IMR-90 (cell line): ENCODE measurements at regions of chr5 and their contacts with region 1.

Region 1: GRCh38 chr5:150458819-150459557 is 9.4 kb upstream of the RPS14 start:
- DNase-seq: peak; percentile 38
- ATAC-seq: peak; percentile 98
- H3K4me3 ChIP-seq: no peak overlapping the region
- H3K27ac ChIP-seq: peak overlapping the region; percentile 33; the same call in 1 of the 2 replicates
- H3K4me1 ChIP-seq: 0 out of 2 replicates have a peak, but pooled peaks cover 2% of the 10 kb centered on the region
- H3K27me3 ChIP-seq: no peaks in the 10 kb centered on the region
- CTCF ChIP-seq: peak; percentile 84
- POLR2A ChIP-seq: no peak
- RAD21 ChIP-seq: peak; percentile 87

Region 2: DNA sequence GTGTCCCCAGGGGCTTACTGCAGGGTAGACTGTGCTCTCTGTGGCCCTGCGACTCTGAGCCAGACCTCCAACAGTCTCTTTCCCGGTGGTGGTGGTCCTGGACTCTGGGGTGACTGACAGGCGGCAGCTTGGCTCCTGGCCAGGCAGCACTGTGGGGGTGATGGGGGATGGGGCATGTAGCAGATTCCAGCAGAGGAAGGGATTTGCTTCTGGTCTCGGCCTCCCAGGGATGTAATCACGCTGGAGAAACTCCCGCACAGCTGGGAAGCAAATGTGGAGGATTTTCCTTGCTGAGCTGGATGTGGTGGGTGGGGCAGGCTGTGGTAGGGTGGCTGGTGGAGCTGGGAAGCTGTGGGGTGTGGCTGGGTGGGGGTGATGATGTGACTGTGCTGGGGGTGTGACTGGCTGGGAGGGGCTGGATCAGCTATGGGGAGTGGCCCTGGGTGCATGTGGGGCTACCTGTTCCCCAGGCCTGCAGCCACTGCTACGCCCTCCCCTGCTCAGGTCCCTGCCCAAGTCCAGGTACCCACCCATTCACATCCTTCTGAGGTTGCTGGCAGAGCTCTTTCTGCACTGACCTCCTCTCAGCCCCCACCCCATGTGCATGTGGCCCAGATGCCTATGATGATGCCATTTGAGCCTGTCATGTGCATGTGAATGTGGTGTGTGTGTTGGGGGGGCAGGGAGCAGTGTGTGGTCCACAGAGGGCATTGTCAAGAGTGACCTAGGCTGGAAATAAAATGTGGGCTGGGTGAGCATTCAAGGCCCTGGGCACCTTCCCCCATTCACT is 52.8 kb after region 1 on chr5:
- CTCF ChIA-PET with region 1: no interaction called
- POLR2A ChIA-PET with region 1: no interaction called
- dilution Hi-C with region 1: no loop called
- in situ Hi-C with region 1: no loop called
- intact Hi-C with region 1: no loop called
- DNase-seq: peak; percentile 80
- ATAC-seq: peak; percentile 68
- H3K4me3 ChIP-seq: no peak overlapping the region
- H3K27ac ChIP-seq: peak overlapping the region; percentile 38
- H3K4me1 ChIP-seq: peaks cover 63% of the 10 kb centered on the region
- H3K27me3 ChIP-seq: no peaks in the 10 kb centered on the region
- CTCF ChIP-seq: no peak
- POLR2A ChIP-seq: no peak
- RAD21 ChIP-seq: no peak

Region 3: GRCh38 chr5:150523472-150524350 is 64.7 kb after region 1 on chr5:
- CTCF ChIA-PET with region 1: interaction called, 3 read pairs
- POLR2A ChIA-PET with region 1: no interaction called
- dilution Hi-C with region 1: no loop called
- in situ Hi-C with region 1: loop called (anchors 5 kb)
- intact Hi-C with region 1: loop called (anchors 1 kb)
- DNase-seq: peak; percentile 81
- ATAC-seq: peak; percentile 80
- H3K4me3 ChIP-seq: no peak overlapping the region
- H3K27ac ChIP-seq: no peak overlapping the region
- H3K4me1 ChIP-seq: peaks cover 33% of the 10 kb centered on the region
- H3K27me3 ChIP-seq: no peaks in the 10 kb centered on the region
- CTCF ChIP-seq: peak; percentile 65
- POLR2A ChIP-seq: no peak
- RAD21 ChIP-seq: peak; percentile 77

Region 4: GRCh38 chr5:150544611-150545219 is 85.7 kb after region 1 on chr5:
- CTCF ChIA-PET with region 1: interaction called, 4 read pairs
- POLR2A ChIA-PET with region 1: no interaction called
- dilution Hi-C with region 1: no loop called
- in situ Hi-C with region 1: loop called (anchors 5 kb)
- intact Hi-C with region 1: loop called (anchors 1 kb)
- DNase-seq: peak; percentile 31
- ATAC-seq: peak; percentile 63
- H3K4me3 ChIP-seq: no peak overlapping the region
- H3K27ac ChIP-seq: peak overlapping the region; percentile 28; the same call in 1 of the 2 replicates
- H3K4me1 ChIP-seq: peaks cover 31% of the 10 kb centered on the region
- H3K27me3 ChIP-seq: no peaks in the 10 kb centered on the region
- CTCF ChIP-seq: peak; percentile 78
- POLR2A ChIP-seq: no peak
- RAD21 ChIP-seq: peak; percentile 59

Region 5: DNA sequence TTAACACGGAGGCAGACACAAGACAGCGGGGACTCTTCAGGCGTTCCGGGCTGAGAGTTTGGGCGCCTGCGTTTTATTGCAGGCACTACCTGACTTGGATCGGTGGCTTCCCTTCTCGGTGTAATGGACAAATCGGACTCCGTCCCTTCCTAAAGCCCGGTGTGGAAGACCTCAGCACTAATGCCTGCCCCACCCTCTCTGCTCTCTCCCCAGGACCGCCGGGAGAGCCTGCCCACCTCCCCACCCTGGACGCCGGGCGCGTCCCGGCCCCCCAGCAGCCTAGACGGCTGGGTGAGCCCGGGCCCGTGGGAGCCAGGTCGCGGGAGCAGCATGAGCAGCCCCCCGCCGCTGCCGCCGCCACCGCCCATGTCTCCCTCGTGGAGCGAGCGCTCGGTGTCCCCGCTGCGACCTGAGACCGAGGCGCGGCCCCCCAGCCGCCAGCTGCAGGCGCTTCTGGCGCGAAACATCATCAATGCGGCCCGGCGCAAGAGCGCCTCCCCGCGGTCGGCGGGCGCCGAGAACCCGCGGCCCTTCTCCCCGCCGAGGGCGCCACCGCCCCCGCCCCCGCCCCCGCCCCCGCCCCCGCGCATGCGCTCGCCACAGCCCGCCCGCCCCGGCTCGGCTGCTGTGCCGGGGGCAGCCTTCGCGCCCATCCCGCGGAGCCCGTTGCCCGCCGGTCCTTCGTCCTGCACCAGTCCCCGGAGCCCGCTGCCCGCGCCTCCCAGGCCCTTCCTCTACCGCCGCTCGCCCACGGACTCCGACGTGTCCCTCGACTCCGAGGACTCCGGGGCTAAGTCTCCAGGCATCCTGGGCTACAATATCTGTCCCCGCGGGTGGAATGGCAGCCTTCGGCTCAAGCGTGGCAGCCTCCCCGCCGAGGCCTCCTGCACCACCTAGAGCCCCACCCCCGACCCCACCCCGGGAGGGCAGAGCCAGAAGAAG is 197.5 kb after region 1 on chr5:
- CTCF ChIA-PET with region 1: no interaction called
- POLR2A ChIA-PET with region 1: no interaction called
- dilution Hi-C with region 1: no loop called
- in situ Hi-C with region 1: loop called (anchors 5 kb)
- intact Hi-C with region 1: loop called (anchors 2 kb)
- DNase-seq: no peak
- ATAC-seq: peak; percentile 40
- H3K4me3 ChIP-seq: peak overlapping the region; percentile 59
- H3K27ac ChIP-seq: peak overlapping the region; percentile 56; the same call in 1 of the 2 replicates
- H3K4me1 ChIP-seq: peaks cover 40% of the 10 kb centered on the region
- H3K27me3 ChIP-seq: no peaks in the 10 kb centered on the region; the same call in 1 of the 2 replicates
- CTCF ChIP-seq: peak; percentile 65
- POLR2A ChIP-seq: no peak
- RAD21 ChIP-seq: peak; percentile 72

Region 6: DNA sequence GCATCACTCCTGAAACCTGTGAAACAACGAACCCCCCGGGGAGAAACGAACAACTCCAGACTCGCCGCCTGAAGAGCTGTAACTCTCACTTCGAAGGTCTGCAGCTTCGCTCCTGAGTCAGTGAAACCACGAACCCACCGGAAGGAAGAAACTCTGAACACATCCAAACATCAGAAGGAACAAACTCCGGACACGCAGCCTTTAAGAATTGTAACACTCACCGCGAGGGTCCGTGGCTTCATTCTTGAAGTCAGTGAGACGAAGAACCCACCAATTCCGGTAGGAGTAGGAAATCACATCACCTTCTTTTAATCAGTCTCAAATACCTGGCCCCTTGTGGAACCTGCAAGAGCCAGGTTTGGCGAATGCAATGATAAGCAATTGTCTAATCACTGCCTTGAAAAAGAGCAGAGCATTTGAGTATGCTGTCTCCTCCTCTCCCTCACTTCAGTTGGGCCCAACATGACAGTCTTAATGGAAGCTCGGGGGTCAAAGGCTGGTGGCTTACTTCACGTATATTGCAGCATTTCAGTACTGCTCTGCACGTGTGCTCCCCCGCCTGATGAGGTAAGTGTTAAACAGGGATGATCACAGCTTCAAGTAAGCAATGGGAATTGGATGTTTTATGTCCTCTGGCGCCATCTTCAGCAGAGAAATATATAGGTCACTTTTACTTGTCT is 387.8 kb after region 1 on chr5:
- CTCF ChIA-PET with region 1: no interaction called
- POLR2A ChIA-PET with region 1: no interaction called
- dilution Hi-C with region 1: no loop called
- in situ Hi-C with region 1: loop called (anchors 10 kb)
- intact Hi-C with region 1: loop called (anchors 2 kb)
- DNase-seq: peak; percentile 88
- ATAC-seq: peak; percentile 97
- H3K4me3 ChIP-seq: no peak overlapping the region
- H3K27ac ChIP-seq: no peak overlapping the region
- H3K4me1 ChIP-seq: no peaks in the 10 kb centered on the region
- H3K27me3 ChIP-seq: peaks cover 12% of the 10 kb centered on the region
- CTCF ChIP-seq: peak; percentile 83
- POLR2A ChIP-seq: 0 out of 2 replicates have a peak, but pooled peaks have one; percentile 26
- RAD21 ChIP-seq: peak; percentile 84